ENCODE measurements at regions of chr5 and their contacts with region 1.

Region 1: GRCh38 chr5:76310208-76310607 is 92.9 kb upstream of the IQGAP2 start:
- DNase-seq: no peak
- ATAC-seq: no peak
- H3K4me3 ChIP-seq: no peak overlapping the region
- H3K27ac ChIP-seq: no peak overlapping the region
- H3K4me1 ChIP-seq: no peaks in the 10 kb centered on the region
- H3K27me3 ChIP-seq: no peaks in the 10 kb centered on the region
- CTCF ChIP-seq: no peak
- EP300 ChIP-seq: no peak
- POLR2A ChIP-seq: no peak
- RAD21 ChIP-seq: no peak

Region 2: GRCh38 chr5:76104027-76104426 is 206.2 kb before region 1 on chr5:
- CTCF ChIA-PET with region 1: no interaction called
- POLR2A ChIA-PET with region 1: no interaction called
- RAD21 ChIA-PET with region 1: no interaction called
- SMC1A ChIA-PET with region 1: no interaction called
- in situ Hi-C with region 1: no loop called
- intact Hi-C with region 1: no loop called
- DNase-seq: no peak
- ATAC-seq: peak; percentile 54; the same call in 2 of the 3 replicates
- H3K4me3 ChIP-seq: no peak overlapping the region
- H3K27ac ChIP-seq: no peak overlapping the region
- H3K4me1 ChIP-seq: peaks cover 6% of the 10 kb centered on the region; the same call in 1 of the 2 replicates
- H3K27me3 ChIP-seq: no peaks in the 10 kb centered on the region; a peak in 1 of 4 replicates
- CTCF ChIP-seq: no peak
- EP300 ChIP-seq: no peak
- POLR2A ChIP-seq: no peak
- RAD21 ChIP-seq: no peak

Region 3: DNA sequence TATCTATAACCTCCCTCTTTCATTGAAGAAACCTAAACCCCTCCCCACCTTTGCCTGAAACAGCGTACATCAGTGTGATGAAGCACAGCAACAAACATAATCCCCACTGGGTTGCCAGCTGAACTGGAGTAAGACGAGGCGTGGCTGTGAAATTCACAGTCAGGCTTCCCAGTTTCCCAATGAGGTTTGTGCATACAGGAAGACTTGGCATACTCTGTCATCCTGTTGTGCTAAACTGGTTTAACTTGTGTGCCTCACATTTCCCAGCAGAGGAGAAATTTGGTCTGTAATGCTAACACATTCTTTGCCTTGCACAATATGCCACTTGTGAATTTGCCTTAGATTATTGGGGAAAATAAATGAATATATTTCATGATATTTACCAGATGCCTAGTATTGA is 105.5 kb before region 1 on chr5:
- CTCF ChIA-PET with region 1: no interaction called
- POLR2A ChIA-PET with region 1: no interaction called
- RAD21 ChIA-PET with region 1: no interaction called
- SMC1A ChIA-PET with region 1: no interaction called
- in situ Hi-C with region 1: no loop called
- intact Hi-C with region 1: no loop called
- DNase-seq: no peak
- ATAC-seq: no peak
- H3K4me3 ChIP-seq: no peak overlapping the region
- H3K27ac ChIP-seq: no peak overlapping the region
- H3K4me1 ChIP-seq: no peaks in the 10 kb centered on the region
- H3K27me3 ChIP-seq: no peaks in the 10 kb centered on the region
- CTCF ChIP-seq: no peak
- EP300 ChIP-seq: no peak
- POLR2A ChIP-seq: no peak
- RAD21 ChIP-seq: no peak

Region 4: DNA sequence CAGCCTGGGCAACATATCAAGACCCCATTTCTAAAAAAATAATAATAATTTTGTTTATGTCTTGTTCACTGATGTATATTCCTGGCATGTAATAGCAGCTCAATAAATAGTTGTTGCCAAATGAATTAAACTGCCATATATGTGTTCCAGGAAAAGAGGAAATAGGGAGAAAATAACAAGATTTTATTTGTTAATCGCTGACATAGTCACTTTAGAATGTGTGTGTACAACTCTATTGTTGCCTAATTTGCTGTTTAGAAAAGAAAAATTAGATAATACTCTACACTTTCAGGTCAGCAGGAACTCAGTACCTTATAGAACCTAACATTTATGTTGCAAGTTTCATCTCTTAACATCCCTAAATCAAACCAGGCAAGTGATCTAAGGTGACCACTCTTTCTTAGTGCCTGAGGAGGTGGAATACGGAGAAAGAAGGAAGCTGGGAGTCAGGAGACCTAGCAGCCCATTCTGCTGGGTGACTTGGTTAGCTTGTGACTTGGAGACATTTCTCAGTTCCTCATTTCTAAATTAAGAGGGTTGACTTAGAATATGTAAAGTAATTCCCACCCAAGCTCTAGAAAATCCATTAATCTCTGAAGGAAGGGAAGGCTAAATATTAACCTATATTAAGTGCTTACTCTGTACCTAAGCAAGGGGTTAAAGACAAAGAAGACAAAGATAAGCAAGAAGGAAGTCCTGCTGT is 17.4 kb before region 1 on chr5:
- CTCF ChIA-PET with region 1: interaction called, 31 read pairs
- POLR2A ChIA-PET with region 1: interaction called, 6 read pairs
- RAD21 ChIA-PET with region 1: interaction called, 6 read pairs
- SMC1A ChIA-PET with region 1: interaction called, 7 read pairs
- in situ Hi-C with region 1: no loop called
- intact Hi-C with region 1: no loop called
- DNase-seq: no peak
- ATAC-seq: peak; percentile 94
- H3K4me3 ChIP-seq: no peak overlapping the region
- H3K27ac ChIP-seq: no peak overlapping the region
- H3K4me1 ChIP-seq: peaks cover 10% of the 10 kb centered on the region; the same call in 1 of the 2 replicates
- H3K27me3 ChIP-seq: no peaks in the 10 kb centered on the region
- CTCF ChIP-seq: no peak
- EP300 ChIP-seq: peak; percentile 54 to 71; a peak in 3 of 4 replicates
- POLR2A ChIP-seq: no peak
- RAD21 ChIP-seq: no peak